Dorsolateral prefrontal cortex (tissue), 120 donors: ENCODE measurements at regions of chr2 and their contacts with region 1.

Region 1: GRCh38 chr2:120252225-120253021 is at the start of gene RALB:
- DNase-seq: peak; percentile 99 to 100 (median 100)
- H3K4me3 ChIP-seq: peak within 1 kb of the TSS; percentile 60 to 98 (median 82)
- H3K27ac ChIP-seq: peak within 1 kb of the TSS in 58 of 59 donors; percentile 17 to 95 (median 82)
- H3K27me3 ChIP-seq: no peaks in the 10 kb centered on the region
- CTCF ChIP-seq: peak in 7 of 56 donors; percentile 2 to 54 (median 8)
- total RNA-seq, gene RALB: 29.9 to 98.4 (median 61.4) TPM

Region 2: GRCh38 chr2:120223034-120223912 is 29.1 kb before region 1 on chr2 and contains the start of gene TMEM185B:
- intact Hi-C with region 1: loop called (anchors 1 to 2 kb)
- DNase-seq: peak; percentile 80 to 95 (median 86)
- H3K4me3 ChIP-seq: peak within 1 kb of the TSS; percentile 61 to 90 (median 80)
- H3K27ac ChIP-seq: peak within 1 kb of the TSS in 57 of 59 donors; percentile 75 to 96 (median 90)
- H3K27me3 ChIP-seq: no peaks in the 10 kb centered on the region
- CTCF ChIP-seq: peak in 41 of 56 donors; percentile 5 to 65 (median 25)
- total RNA-seq, gene TMEM185B: 11.4 to 24.4 (median 15.6) TPM